ENCODE measurements at regions of chr12 and their contacts with region 1.

Region 1: DNA sequence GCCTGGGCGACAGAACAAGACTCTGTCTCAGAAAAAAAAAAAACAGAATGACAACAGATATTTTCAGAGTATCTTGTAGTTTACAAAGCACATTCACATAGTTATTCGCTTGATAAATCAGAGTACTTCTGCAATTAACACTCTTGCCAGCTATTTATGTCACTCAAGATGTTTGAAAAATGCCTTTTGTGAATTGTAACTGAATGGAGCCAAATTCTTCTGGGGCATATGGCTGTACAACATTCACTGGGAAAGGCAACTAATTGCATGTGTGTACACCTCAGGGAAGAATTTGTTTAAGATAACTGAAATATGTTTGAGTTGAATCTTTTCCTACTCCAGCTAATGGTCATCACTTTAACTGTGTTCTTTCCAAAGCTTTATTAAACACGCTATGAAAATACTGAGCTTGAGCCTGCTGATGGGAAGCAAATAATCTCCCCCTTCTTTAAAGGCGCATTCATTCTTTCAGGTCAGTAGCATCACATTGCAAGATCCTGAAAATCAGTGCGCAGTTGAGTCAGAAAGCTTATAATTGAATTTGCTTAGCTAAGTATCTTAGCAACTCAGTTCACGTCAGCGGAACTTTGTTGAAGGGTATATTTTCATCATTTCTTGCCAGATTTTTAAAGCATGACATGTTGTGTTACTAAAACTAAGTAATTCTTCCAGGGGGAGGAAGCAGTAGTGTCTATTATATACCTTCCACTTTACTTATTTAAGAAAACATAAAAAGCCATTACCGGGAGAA is 66.6 kb downstream of the SINHCAF start:
- DNase-seq: no peak
- H3K4me3 ChIP-seq: no peak overlapping the region
- H3K27ac ChIP-seq: no peak overlapping the region
- H3K4me1 ChIP-seq: peaks cover 5% of the 10 kb centered on the region
- H3K27me3 ChIP-seq: no peaks in the 10 kb centered on the region
- CTCF ChIP-seq: no peak

Region 2: DNA sequence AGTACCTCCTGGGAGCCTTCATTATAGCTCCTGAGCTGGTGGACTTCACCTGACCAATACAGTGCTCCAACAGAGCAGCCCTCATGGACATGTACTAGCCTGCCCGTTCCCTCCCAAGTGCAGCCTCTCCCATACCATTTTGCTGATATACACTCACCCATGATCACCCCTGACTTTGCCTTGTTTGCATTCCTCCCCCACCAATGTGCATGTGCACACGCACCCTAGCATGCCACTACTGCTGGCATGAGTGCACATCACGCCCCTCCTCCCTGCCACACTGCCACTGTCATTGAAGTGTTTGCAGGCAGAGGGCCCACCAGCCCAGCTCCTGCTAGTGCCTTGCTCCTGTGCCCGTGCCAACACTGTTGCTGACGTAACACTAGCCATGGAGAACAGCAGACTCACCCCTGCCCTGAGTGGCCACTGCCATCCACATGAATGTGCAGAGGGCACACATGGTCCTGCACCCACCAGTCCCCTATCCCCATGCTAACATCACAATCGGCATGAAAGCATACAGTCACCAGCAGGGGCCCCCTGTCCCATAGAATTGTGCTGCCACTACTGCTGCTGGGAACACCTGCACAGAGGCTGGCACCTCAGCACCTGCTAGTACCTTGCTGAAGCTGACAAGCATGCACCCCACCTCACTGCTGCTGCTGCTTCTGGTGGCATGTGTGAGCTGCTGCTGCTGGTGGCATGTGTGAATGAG is 43.6 kb before region 1 on chr12:
- CTCF ChIA-PET with region 1: no interaction called
- dilution Hi-C with region 1: no loop called
- in situ Hi-C with region 1: no loop called
- intact Hi-C with region 1: no loop called
- DNase-seq: peak; percentile 76
- H3K4me3 ChIP-seq: no peak overlapping the region
- H3K27ac ChIP-seq: no peak overlapping the region
- H3K4me1 ChIP-seq: peaks cover 17% of the 10 kb centered on the region
- H3K27me3 ChIP-seq: peaks cover 5% of the 10 kb centered on the region
- CTCF ChIP-seq: peak in 1 of 2 donors; percentile 14

Region 3: GRCh38 chr12:31339831-31340622 is 80.7 kb after region 1 on chr12:
- CTCF ChIA-PET with region 1: no interaction called
- dilution Hi-C with region 1: loop called (anchors 5 kb)
- in situ Hi-C with region 1: no loop called
- intact Hi-C with region 1: no loop called
- DNase-seq: no peak
- H3K4me3 ChIP-seq: no peak overlapping the region
- H3K27ac ChIP-seq: no peak overlapping the region
- H3K4me1 ChIP-seq: no peaks in the 10 kb centered on the region
- H3K27me3 ChIP-seq: no peaks in the 10 kb centered on the region
- CTCF ChIP-seq: no peak

Region 4: DNA sequence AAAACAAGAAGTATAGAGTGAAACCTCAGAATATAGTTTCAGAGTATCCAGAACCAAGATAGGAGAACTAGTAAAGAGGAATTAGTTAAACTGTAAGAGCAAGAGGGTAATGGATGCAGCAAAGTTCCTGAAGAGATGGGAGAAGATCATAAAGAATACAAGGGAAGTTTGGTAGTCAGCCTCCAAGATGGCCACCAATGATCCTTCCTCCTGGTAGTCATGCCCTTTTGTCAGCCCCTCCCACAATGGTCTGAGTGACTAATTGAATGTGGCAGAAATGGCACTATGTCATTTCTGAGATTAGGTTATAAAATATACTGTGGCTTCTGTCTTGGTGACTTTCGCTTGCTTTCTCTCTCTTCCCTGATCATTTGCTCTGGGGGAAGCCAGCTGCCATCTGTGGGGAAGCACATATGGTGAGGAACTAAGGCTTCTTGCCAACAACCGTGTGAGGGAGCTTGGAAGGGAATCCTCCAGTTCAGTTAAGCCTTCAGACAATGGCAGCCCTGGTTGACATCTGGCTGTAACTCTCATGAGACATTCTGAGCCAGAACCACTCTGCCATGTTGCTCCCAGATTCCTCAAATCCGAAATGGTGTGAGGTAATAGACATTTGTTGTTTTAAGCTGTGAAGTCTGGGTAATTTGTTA is 524.8 kb after region 1 on chr12:
- CTCF ChIA-PET with region 1: no interaction called
- dilution Hi-C with region 1: no loop called
- in situ Hi-C with region 1: no loop called
- intact Hi-C with region 1: no loop called
- DNase-seq: no peak
- H3K4me3 ChIP-seq: no peak overlapping the region
- H3K27ac ChIP-seq: no peak overlapping the region
- H3K4me1 ChIP-seq: no peaks in the 10 kb centered on the region
- H3K27me3 ChIP-seq: no peaks in the 10 kb centered on the region
- CTCF ChIP-seq: no peak